ENCODE measurements at regions of chr21 and their contacts with region 1.

Region 1: DNA sequence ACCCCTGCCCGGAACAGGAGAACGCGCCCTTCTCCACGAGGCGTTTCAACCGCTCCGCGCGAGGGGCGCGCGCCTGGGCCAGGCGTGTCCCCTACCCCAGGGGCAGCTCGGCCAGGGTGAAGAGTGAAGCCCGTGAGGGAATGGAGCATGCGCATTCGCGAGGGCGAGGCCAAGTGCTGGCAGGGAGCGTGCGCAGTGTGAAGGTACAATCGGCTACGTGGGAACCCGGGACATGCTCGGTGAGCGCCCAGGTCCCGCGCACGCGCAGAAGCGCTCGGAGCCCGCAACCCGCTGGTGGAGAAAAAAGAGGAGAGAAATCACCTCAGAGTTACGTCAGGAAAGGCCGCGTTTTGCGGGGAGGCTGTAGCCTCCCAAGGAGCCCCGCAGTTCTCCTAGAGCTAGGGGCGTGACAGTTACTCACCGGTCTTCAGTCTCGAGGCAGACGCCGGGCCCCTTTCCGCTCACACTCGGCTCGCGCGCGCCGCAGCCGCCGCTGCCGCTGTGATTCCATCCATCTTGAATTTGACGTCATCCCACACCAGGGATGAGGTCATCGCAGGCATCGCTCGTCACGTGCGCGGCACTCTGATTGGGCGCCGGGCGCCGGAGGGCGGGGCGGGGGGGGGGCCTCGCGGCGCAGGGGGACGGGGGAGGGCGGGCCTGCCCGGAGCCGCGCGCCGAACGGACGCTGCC is at the start of gene ZBTB21:
- DNase-seq: peak; percentile 98 to 99 (median 99)
- ATAC-seq: peak; percentile 97 to 99 (median 98)
- H3K4me3 ChIP-seq: peak within 1 kb of the TSS; percentile 72 to 100 (median 87)
- H3K27ac ChIP-seq: peak within 1 kb of the TSS; percentile 95 to 100 (median 99)
- H3K4me1 ChIP-seq: peaks cover 0 to 20% (median 11%) of the 10 kb centered on the region in 12 donors
- H3K27me3 ChIP-seq: peaks cover 0 to 2% (median 0%) of the 10 kb centered on the region in 9 donors
- CTCF ChIP-seq: no peak
- POLR2A ChIP-seq: peak in 1 of 2 donors; percentile 92
- total RNA-seq, gene ZBTB21: 4.3 to 10.2 (median 6.2) TPM

Region 2: DNA sequence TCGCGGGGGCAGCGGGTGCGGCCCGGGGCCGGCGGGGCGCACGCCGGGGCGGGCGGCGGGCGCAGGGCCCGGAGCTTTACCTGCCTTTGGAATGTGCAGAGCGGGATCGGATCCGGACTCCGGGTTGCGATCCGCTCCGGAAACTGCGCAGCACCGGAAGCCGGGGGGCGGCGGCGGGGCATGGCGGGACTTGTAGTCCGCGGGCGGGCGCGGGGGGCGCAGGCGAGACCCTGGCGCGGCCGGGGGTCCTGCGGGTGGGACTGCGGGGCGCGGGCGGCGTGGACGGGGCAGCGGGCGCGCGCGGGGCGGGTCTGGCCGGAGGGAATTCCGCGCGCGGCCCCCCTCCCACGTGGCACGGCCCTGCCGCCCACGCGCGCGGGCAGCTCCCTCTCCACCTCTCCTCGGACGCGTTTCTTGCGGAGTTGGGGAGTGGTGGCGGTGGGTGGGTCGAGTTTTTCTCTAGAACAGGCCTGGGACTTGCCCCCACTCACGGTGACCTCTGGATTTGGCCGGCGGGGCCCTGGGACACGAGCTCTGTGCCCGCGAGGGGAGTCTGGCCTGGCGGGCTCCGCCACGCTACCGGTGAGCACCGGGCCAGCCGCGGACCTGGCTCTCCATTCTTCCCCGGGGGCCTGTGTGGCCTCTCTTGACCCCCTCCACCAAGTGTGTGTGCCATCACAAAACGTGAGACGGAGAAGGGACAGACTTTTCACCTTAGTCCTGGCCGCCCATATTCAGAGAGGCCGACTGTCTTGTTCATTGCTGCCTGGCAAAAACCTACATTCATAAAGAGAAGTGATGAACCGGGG is 130.6 kb before region 1 on chr21 and contains the start of gene PRDM15:
- intact Hi-C with region 1: loop called in 1 of 10 experiments (anchors 10 kb)
- DNase-seq: peak; percentile 85 to 91 (median 89)
- ATAC-seq: peak; percentile 44 to 74 (median 67)
- H3K4me3 ChIP-seq: peak within 1 kb of the TSS; percentile 74 to 99 (median 84)
- H3K27ac ChIP-seq: peak within 1 kb of the TSS; percentile 7 to 87 (median 80)
- H3K4me1 ChIP-seq: peaks cover 0 to 20% (median 12%) of the 10 kb centered on the region in 12 donors
- H3K27me3 ChIP-seq: no peaks in the 10 kb centered on the region
- CTCF ChIP-seq: no peak
- POLR2A ChIP-seq: peak in 1 of 2 donors; percentile 33
- total RNA-seq, gene PRDM15: 2.1 to 6.3 (median 2.9) TPM

Region 3: GRCh38 chr21:41933313-41934086 is 76.5 kb before region 1 on chr21:
- intact Hi-C with region 1: loop called in 2 of 10 experiments (anchors 5 to 10 kb)
- DNase-seq: no peak
- ATAC-seq: peak; percentile 27 to 69 (median 44)
- H3K4me3 ChIP-seq: peak overlapping the region in 10 of 12 donors; percentile 6 to 47 (median 32)
- H3K27ac ChIP-seq: peak overlapping the region in 11 of 12 donors; percentile 26 to 81 (median 70)
- H3K4me1 ChIP-seq: peaks cover 0 to 35% (median 16%) of the 10 kb centered on the region in 12 donors
- H3K27me3 ChIP-seq: no peaks in the 10 kb centered on the region
- CTCF ChIP-seq: peak in 11 of 12 donors; percentile 10 to 56 (median 37)
- POLR2A ChIP-seq: no peak

Region 4: DNA sequence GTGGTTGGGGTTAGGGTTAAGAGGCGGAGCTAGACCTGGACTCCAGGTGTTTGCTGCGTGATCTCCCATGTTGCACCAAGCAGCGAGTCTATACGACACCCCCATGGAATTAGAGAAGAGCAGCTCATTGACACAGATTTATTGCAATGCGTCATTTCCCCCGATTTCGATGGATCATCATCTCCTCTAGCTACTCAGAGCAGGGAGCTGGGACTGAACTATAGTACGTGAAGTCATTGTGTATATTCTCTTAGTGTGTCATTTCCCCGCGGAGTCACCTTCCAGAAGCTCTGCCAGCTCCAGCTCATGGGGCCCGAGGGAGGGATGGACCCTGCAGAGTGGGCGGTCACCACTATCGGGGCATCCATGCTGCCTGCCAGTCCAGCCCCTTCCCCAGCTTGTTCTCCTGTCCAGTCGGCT is 48.7 kb before region 1 on chr21:
- intact Hi-C with region 1: loop called in 2 of 10 experiments (anchors 5 kb)
- DNase-seq: no peak
- ATAC-seq: peak in 1 of 4 donors; percentile 20
- H3K4me3 ChIP-seq: no peak overlapping the region
- H3K27ac ChIP-seq: no peak overlapping the region
- H3K4me1 ChIP-seq: peaks cover 4 to 29% (median 20%) of the 10 kb centered on the region in 12 donors
- H3K27me3 ChIP-seq: peaks cover 0 to 5% (median 0%) of the 10 kb centered on the region in 9 donors
- CTCF ChIP-seq: no peak
- POLR2A ChIP-seq: no peak

Region 5: DNA sequence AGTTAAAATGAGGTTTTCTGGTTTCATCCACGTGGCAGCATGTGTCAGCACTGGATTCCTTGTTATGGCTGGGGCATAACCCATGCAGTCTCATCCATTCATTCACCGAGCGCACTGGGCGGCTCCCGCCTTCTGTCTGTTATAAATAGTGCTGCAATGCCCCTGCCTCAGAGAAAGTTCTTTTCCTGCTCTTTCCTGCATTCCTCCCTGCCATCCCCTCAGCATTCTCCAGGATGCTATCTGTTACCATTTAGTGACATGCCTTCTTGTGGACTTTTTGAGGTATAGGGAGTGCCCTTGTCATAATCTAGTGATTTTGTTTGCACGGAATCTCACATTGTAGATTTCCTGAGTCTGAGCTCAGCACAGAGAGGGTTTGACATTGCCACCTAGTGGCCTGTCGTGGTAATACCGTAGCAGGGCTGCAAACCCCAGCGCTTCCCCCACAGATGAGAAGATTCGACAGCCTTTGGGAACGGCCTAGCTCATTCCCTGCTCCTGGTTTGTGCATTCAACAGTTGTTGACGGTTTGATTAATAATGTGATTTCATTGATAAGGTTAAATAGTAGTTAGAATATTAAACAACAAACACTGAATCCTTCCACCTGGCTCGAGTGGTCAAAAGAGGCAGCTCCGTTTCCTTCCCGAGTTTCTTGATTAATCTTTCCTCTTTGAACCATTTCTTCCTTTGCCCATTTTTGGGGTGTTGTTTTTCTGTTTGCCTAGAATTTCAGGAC is 107.4 kb after region 1 on chr21:
- intact Hi-C with region 1: loop called in 5 of 10 experiments (anchors 1 to 5 kb)
- DNase-seq: peak; percentile 68 to 79 (median 69)
- ATAC-seq: peak; percentile 68 to 87 (median 77)
- H3K4me3 ChIP-seq: peak overlapping the region in 1 of 12 donors; percentile 32
- H3K27ac ChIP-seq: no peak overlapping the region
- H3K4me1 ChIP-seq: peaks cover 0 to 18% (median 6%) of the 10 kb centered on the region in 12 donors
- H3K27me3 ChIP-seq: peaks cover 0 to 59% (median 22%) of the 10 kb centered on the region in 9 donors
- CTCF ChIP-seq: peak; percentile 89 to 96 (median 94)
- POLR2A ChIP-seq: no peak

Measured in heart left ventricle (tissue), 16 donors.